ENCODE measurements at regions of chr18 and their contacts with region 1.

Region 1: DNA sequence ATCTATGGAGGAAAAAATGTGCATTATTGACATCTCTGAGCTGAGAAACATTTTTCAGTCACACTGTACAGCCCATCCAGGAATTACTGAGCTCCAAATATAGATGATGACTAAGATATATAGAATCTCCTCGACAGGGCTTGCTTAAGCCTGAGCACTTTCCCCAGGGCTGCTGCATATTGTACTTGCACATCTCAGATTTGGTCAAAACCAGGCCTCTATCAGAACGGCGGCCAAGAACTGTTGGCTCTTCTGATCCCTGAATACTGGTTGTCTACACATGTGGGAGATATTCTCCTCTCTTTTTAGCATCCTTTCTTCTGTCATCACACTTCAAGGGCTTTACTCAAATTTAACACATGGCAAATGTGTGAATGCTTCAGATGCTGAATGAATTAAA is 201.5 kb upstream of the SLC35G4 start:
- DNase-seq: no peak

Region 2: GRCh38 chr18:11339188-11339775 is 68.7 kb before region 1 on chr18:
- intact Hi-C with region 1: loop called in 1 of 2 experiments (anchors 2 kb)
- DNase-seq: no peak

Region 3: GRCh38 chr18:11468617-11469016 is 60.7 kb after region 1 on chr18:
- intact Hi-C with region 1: loop called in 1 of 2 experiments (anchors 10 kb)
- DNase-seq: no peak

Region 4: GRCh38 chr18:11533942-11534496 is 126.1 kb after region 1 on chr18:
- intact Hi-C with region 1: no loop called
- DNase-seq: no peak

Region 5: GRCh38 chr18:11719621-11720020 is 311.7 kb after region 1 on chr18:
- intact Hi-C with region 1: no loop called
- DNase-seq: no peak

Measured in posterior vena cava (tissue), 2 donors.